Uterus (tissue), 4 donors: ENCODE measurements at regions of chr6 and their contacts with region 1.

Region 1: GRCh38 chr6:28355743-28356665 is 6.3 kb downstream of the ZKSCAN3 start:
- DNase-seq: peak; percentile 69 to 87
- H3K4me3 ChIP-seq: peak overlapping the region; percentile 62 to 66
- H3K27ac ChIP-seq: peak overlapping the region; percentile 90 to 94
- H3K4me1 ChIP-seq: peaks cover 0 to under 1% of the 10 kb centered on the region in 2 donors
- H3K27me3 ChIP-seq: no peaks in the 10 kb centered on the region
- CTCF ChIP-seq: peak; percentile 84 to 93 (median 88)
- POLR2A ChIP-seq: no peak

Region 2: DNA sequence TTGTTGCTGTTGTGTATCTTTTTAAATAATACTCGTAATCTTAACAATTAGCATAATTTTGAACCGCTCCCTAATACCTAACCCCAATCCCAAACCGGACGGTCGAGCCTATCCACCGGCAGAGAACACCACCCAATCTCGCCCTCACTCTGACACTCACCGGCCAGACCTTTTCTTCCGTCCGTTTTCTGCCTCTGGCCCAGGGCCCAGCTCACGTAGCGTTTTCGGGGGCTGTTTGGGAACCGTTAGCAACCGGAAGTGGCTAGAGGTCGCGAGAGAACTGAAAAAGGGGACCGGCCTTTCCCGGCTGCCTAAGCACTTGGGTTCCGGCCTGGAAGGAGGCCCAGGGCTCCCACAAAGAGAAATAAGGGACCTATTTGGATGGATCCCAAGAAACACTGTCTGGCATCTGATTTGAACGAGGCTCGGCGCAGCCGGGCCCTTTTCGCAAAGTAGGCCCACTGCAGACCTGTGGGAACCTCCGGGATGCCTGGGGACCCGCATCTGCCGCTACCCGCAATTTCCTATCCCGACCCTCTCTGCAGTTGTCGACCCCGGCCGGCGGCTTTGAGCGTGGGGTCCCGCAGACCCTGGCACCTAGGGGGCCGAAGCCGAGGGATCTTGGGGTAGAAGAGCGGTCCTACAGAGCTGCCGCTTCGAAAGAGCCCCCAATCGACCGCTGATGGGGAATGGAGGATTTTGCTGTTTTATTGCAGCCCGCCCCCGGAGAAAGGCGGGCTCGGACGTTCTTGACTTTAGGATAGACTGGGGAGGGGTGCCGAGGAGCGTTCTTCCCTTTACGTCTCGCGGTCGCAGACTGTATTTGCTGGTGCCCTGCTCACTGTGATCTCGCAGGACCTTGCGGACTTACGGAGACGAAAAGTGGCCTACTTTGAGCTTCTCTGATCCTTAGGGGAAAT is 219.2 kb before region 1 on chr6:
- intact Hi-C with region 1: loop called (anchors 10 kb)
- DNase-seq: peak; percentile 92 to 95
- H3K4me3 ChIP-seq: peak overlapping the region; percentile 82 to 93
- H3K27ac ChIP-seq: peak overlapping the region; percentile 98
- H3K4me1 ChIP-seq: no peaks in the 10 kb centered on the region
- H3K27me3 ChIP-seq: no peaks in the 10 kb centered on the region
- CTCF ChIP-seq: no peak
- POLR2A ChIP-seq: peak in 1 of 2 donors; percentile 27